GM13977 (cell line): ENCODE measurements at regions of chr12 and their contacts with region 1.

Region 1: DNA sequence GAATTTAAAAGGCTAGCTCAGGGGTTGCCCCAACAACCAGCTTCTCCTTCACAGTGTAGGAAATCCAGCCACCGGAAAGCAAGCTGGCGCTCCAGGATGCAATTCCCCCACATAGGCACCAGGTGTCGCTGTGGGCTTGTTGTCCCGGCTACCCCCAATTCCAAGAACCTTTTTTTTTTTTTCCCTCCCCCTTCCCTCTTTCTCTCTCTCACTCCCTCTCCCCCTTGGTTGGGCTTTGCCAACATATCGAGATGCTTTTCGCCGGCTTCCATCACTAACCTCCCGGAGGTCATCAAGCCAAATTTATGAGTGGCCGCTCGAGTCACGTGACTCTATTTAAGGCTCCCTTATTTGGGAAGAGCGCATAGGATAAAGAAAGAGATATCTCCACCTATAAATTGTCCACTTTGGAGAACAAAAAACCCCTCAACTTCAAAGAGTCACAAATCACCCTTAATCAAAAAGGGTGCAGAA is at the start of gene HOXC5:
- DNase-seq: peak; percentile 93
- CTCF ChIP-seq: peak; percentile 92

Region 2: GRCh38 chr12:53887006-53887405 is 145.7 kb before region 1 on chr12:
- in situ Hi-C with region 1: no loop called
- DNase-seq: no peak
- CTCF ChIP-seq: no peak

Region 3: DNA sequence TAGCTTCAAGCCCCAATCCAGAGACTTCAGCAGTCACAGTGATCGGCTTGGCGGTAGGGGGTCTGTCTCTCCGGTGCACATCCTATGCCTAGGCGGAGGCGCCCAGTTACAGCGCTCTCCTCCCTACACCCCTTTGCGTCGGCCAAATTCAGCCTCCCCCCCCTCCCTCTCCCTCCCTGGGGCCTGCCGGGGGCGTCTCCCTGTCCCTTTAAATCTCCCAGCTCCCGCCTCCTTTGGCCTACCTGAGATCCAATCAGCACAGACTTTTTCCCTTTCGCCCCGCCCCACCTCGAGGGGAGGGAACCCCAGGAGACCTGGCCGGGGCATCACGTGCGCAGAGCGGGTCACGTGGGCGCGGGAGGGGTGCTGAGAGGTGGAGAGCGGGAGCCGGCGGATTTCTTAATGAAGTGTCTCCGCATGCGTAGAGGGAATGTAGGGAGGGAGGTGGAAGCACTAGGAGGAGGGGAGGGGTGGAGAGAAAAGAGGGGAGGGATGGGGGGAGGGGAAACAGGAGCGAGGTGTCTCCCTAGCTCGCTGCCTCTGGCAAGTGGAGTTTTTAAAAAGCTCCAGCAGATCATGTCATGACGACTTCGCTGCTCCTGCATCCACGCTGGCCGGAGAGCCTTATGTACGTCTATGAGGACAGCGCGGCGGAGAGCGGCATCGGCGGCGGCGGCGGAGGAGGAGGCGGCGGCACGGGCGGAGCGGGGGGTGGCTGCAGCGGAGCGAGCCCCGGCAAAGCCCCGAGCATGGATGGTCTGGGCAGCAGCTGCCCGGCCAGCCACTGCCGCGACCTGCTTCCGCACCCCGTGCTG is 94.1 kb before region 1 on chr12 and contains the start of gene HOXC13:
- in situ Hi-C with region 1: loop called (anchors 25 kb)
- DNase-seq: peak; percentile 65
- CTCF ChIP-seq: no peak